Activated CD4-positive, alpha-beta memory T cell treated with anti-CD3 and anti-CD28 coated beads for 36 hours (primary cell): ENCODE measurements at regions of chr5 and their contacts with region 1.

Region 1: DNA sequence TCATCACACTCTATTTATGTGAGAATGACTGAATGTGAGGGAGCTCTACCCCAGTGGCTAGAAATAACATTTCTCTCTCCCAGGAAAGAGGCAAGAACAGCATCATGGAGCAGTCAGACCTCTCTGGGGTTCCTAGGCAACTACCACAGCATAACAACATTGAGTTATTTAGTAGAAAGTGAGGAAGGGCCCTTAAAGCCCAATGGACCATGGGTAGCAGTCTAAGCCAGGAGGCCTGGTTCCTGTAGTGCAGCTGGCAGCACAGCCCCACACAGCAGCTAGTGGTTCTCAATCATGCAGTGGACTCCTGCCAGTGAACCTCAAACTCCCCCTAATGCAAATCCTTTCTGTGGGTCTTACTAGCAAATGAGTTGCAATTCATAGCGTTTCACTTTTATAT is 55.3 kb downstream of the SPEF2 start:
- DNase-seq: peak; percentile 66
- H3K4me3 Mint-ChIP-seq: no peak overlapping the region
- H3K27ac Mint-ChIP-seq: peak overlapping the region; percentile 69
- H3K4me1 Mint-ChIP-seq: peaks cover 60% of the 10 kb centered on the region
- H3K27me3 Mint-ChIP-seq: no peaks in the 10 kb centered on the region

Region 2: GRCh38 chr5:35717718-35718117 is 44.7 kb after region 1 on chr5:
- CTCF ChIA-PET with region 1: no interaction called
- POLR2A ChIA-PET with region 1: no interaction called
- intact Hi-C with region 1: no loop called
- DNase-seq: no peak
- H3K4me3 Mint-ChIP-seq: no peak overlapping the region
- H3K27ac Mint-ChIP-seq: no peak overlapping the region
- H3K4me1 Mint-ChIP-seq: no peaks in the 10 kb centered on the region
- H3K27me3 Mint-ChIP-seq: no peaks in the 10 kb centered on the region

Region 3: DNA sequence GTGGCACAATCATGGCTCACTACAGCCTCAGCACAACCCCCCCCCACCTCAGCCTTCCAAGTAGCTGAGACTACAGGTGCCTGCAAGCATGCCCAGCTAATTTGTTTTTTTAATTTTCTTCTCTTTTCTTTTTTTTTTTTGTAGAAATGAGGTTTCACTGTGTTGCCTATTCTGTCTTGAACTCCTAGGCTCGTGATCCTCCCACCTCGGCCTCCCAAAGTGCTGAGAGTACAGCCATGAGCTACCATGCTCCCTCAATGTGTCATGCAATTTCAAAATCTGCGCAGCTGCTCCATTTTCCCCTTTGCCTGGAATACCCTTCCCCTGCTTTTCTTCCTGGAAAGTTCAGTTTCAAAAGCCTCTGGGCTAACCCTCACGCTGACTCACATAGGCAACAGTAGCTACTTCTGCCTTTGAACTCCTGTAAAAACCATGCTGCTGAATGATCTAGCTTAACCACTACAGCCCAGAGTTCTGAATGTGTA is 112.6 kb after region 1 on chr5:
- CTCF ChIA-PET with region 1: interaction called, 4 read pairs
- POLR2A ChIA-PET with region 1: no interaction called
- intact Hi-C with region 1: loop called (anchors 2 kb)
- DNase-seq: peak; percentile 71
- H3K4me3 Mint-ChIP-seq: peak overlapping the region; percentile 17
- H3K27ac Mint-ChIP-seq: peak overlapping the region; percentile 89
- H3K4me1 Mint-ChIP-seq: peaks cover 85% of the 10 kb centered on the region
- H3K27me3 Mint-ChIP-seq: no peaks in the 10 kb centered on the region

Region 4: DNA sequence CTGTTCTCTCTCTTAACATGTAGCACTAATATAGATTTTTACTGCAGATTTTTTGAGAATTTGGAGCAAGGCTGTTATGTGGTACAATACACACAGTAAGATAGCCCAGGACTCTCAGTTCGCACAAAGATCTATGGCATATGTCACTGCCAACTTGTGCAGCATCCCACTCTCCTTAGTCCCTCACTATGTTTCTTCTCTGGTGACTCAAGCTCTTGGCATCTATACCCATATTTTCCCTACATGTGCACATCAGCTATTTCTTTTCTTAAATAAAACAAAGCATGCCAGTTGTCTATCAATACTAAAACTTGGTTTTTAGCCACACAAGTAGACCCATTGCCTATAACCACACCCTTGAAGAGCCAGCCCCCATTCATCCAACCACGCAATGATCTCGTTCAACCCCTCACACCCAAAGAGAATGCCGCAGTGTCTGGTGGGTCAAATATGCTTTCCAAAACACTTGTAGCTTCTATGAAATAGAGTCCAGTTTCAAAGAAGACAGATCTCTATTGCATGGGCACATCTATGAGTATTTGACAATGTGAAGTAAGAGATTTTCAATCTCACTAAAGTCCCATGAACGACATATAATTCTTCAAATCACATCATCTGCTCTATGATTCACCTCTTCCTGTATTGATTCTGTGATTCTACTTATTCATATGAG is 165.5 kb after region 1 on chr5:
- CTCF ChIA-PET with region 1: no interaction called
- POLR2A ChIA-PET with region 1: no interaction called
- intact Hi-C with region 1: loop called (anchors 5 kb)
- DNase-seq: peak; percentile 76
- H3K4me3 Mint-ChIP-seq: peak overlapping the region; percentile 50
- H3K27ac Mint-ChIP-seq: peak overlapping the region; percentile 96
- H3K4me1 Mint-ChIP-seq: peaks cover 70% of the 10 kb centered on the region
- H3K27me3 Mint-ChIP-seq: no peaks in the 10 kb centered on the region